ENCODE measurements at regions of chr15 and their contacts with region 1.

Region 1: DNA sequence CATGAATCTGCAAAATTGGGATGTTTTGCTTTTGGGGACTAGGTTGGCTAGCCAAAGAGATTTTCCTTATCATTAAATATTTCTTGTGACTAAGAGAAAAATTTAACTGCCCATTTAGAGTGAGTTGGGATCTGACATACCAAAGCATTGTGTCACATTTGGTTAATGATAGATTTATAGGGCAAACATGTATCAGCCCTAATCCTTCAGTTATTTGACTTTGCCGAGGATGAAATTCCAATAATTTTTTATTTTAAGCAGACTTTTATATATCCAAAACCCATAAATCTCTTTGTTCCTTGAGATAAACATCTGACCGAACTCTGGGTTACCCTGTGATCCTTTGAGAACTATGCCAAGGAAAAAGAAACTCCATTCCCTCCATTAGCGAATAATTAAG is 218.9 kb downstream of the CDIN1 start:
- DNase-seq: peak; percentile 92
- ATAC-seq: peak; percentile 77
- H3K4me3 ChIP-seq: no peak overlapping the region
- H3K27ac ChIP-seq: peak overlapping the region; percentile 20
- H3K4me1 ChIP-seq: peaks cover 37% of the 10 kb centered on the region
- H3K27me3 ChIP-seq: no peaks in the 10 kb centered on the region
- CTCF ChIP-seq: no peak

Region 2: GRCh38 chr15:36688310-36689011 is 109.9 kb before region 1 on chr15:
- CTCF ChIA-PET with region 1: no interaction called
- POLR2A ChIA-PET with region 1: no interaction called
- intact Hi-C with region 1: loop called (anchors 5 kb)
- DNase-seq: peak; percentile 48
- ATAC-seq: peak; percentile 91
- H3K4me3 ChIP-seq: no peak overlapping the region
- H3K27ac ChIP-seq: no peak overlapping the region
- H3K4me1 ChIP-seq: peaks cover 4% of the 10 kb centered on the region; the same call in 1 of the 2 replicates
- H3K27me3 ChIP-seq: no peaks in the 10 kb centered on the region
- CTCF ChIP-seq: no peak

Region 3: GRCh38 chr15:36778531-36778930 is 19.8 kb before region 1 on chr15:
- CTCF ChIA-PET with region 1: no interaction called
- POLR2A ChIA-PET with region 1: no interaction called
- intact Hi-C with region 1: loop called (anchors 1 kb)
- DNase-seq: peak; percentile 35
- ATAC-seq: peak; percentile 96
- H3K4me3 ChIP-seq: no peak overlapping the region
- H3K27ac ChIP-seq: no peak overlapping the region
- H3K4me1 ChIP-seq: no peaks in the 10 kb centered on the region; the same call in 1 of the 2 replicates
- H3K27me3 ChIP-seq: no peaks in the 10 kb centered on the region
- CTCF ChIP-seq: no peak

Measured in PC-3 (cell line).